Panc1 (cell line): ENCODE measurements at regions of chr1 and their contacts with region 1.

Region 1: DNA sequence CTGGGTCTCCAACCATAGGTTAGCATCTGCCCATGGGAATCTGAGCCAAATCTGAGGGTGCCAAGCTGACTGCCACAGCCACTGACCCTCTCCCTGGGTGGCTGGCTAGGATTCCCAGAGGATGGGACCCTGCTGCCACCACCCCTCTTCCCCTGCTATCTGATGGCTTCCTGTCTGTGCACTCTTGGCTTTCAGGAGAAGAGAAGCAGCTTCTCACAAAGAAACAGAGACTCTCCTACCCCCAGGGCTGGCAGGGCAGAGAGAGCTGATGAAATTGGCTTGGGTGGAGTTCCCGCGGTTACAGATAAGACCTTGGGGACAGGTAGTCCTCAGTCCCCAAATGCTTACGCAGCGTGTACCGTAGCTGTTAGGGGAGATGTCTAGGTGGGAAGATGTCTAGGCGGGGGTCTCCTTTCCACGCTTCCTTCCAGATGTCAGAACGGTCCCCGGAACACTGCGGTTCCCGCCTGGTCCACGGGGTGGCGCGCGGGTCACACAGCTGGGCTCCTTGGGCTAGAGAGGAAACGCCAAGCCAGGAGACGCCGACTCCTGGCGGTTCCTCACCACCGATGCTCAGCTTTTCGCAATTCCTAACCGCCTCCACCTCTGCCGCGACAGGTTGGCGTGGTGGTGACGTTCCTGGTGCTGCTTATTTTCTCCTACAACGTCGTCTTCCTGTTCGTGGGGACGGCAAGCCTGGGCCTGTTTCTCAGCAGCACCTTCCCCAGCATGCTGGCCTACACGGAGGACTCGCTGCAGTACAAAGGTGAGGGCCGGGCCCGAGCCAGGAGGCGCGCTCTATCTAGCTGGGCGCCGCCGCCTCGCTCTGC is 40.1 kb downstream of the ELK4 start:
- DNase-seq: peak; percentile 58
- ATAC-seq: peak; percentile 96
- H3K4me3 ChIP-seq: peak overlapping the region; percentile 27 to 56
- H3K27ac ChIP-seq: peak overlapping the region; percentile 41
- H3K4me1 ChIP-seq: no peaks in the 10 kb centered on the region; the same call in 1 of the 2 replicates
- H3K27me3 ChIP-seq: no peaks in the 10 kb centered on the region
- CTCF ChIP-seq: peak; percentile 99

Region 2: DNA sequence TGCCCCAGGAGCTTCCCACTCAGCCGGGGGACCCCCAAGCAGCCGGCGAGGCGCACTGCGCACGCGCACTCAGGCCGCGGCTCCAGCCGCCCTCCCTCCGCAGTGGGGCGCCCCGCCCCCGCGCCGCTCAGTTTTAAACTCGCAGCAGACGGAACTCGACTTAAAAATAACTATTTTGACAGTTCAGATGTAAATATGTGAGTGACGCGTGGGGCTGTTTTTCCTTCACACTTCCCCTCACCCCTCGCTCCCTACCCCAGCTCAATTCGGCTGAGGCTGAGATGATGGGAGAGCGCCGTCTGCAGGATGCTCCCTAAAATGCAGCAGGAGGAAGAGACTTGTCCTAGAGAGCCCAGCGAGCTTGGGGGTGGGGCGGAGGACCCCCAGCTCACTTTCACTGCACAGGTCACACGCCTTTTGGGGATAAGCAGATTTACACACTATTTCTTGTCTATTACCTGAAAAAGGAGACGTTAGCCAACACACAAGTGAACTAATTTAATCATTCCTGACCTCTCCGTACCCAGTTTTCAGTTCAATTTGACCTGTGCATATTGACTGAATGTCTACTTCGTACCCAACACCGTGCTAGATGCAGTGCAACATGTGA is 160.9 kb before region 1 on chr1:
- CTCF ChIA-PET with region 1: interaction called, 13 read pairs
- POLR2A ChIA-PET with region 1: no interaction called
- in situ Hi-C with region 1: no loop called
- intact Hi-C with region 1: no loop called
- DNase-seq: peak; percentile 20
- ATAC-seq: peak; percentile 79
- H3K4me3 ChIP-seq: peak overlapping the region; percentile 48 to 64
- H3K27ac ChIP-seq: no peak overlapping the region
- H3K4me1 ChIP-seq: peaks cover 4% of the 10 kb centered on the region; the same call in 1 of the 2 replicates
- H3K27me3 ChIP-seq: peaks cover 3% of the 10 kb centered on the region
- CTCF ChIP-seq: peak; percentile 96